Right ventricle myocardium superior (tissue), 1 donor: ENCODE measurements at regions of chr12 and their contacts with region 1.

Region 1: GRCh38 chr12:117236456-117237001 is 46.3 kb upstream of the FBXO21 start:
- DNase-seq: peak; percentile 88
- ATAC-seq: peak; percentile 79

Region 2: DNA sequence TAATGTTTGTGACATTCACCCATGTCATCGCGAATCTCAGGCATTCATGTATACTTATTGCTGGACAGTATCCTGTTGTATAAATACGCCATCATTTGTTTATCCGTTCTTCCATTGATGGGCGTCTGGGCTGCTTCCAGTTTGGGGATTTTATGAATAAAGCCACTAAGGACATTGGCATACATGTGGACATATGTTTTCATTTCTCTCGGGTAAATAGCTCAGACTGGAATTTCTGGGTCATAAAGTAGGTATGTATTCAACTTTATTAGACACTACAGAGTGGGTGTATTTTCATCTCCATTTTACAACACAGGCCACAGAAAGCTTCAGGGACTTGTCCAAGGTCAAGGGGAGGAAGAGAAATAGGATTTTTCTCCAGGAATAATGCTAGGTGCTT is 404.2 kb before region 1 on chr12:
- intact Hi-C with region 1: no loop called
- DNase-seq: no peak
- ATAC-seq: no peak

Region 3: DNA sequence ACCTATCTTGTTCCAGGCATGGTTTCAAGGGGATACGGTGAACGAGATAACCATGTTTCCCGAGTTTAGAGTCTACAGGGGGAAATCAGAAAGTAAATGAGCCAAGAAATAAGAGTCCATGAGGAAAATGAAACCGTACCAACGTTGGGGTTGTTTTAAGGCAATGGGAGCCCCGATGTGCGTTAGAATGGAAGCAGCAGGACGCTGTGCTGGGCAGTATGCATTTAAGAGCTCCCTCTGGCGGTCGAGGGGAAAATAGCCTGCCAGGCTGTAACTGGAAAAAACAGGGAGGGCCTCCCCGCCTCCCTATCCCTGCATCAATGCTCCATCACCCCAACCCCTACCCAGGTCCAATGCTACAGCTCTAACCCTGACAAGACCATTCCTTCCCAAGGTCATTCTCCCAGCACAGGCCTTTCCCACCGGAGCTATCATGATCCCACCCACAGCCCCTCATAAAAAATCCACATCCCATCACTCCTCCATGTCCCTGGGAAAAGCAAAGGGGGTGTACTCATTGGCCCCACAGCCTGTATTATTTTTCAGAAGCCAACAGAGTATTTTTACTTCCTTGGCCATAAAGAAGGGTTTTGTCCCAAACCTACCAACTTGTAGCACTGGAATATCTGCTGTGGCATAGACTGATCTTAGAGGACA is 351.2 kb after region 1 on chr12:
- intact Hi-C with region 1: loop called (anchors 10 kb)
- DNase-seq: peak; percentile 62
- ATAC-seq: peak; percentile 77

Region 4: GRCh38 chr12:117671734-117672133 is 435.2 kb after region 1 on chr12:
- intact Hi-C with region 1: loop called (anchors 10 kb)
- DNase-seq: no peak
- ATAC-seq: no peak